Posterior cingulate gyrus (tissue), 11 donors: ENCODE measurements at regions of chr4 and their contacts with region 1.

Region 1: GRCh38 chr4:14028862-14029261 is 401.3 kb upstream of the BOD1L1 start:
- DNase-seq: peak in 9 of 10 donors; percentile 7 to 89 (median 43)

Region 2: DNA sequence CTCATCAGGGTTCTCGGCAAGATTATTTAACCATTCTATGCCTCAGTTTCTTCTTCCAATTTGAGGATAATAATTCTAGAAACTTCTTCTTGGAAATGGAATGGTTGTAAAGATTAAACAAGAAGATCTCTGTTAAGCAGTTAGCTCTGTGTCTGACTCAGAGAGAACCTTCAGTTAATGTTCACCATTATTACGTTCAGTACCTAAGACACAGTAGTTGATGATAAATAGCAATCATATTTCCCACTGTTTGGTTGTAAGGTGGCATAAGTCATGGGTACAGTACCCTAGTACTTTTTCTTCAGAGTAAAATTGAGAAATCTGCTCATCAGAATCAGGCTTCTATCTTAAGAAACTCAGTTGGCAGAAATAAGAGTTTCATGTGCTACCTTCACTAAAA is 34.8 kb before region 1 on chr4:
- intact Hi-C with region 1: loop called (anchors 2 kb)
- DNase-seq: no peak